Endothelial cell of umbilical vein (primary cell): ENCODE measurements at regions of chr6 and their contacts with region 1.

Region 1: DNA sequence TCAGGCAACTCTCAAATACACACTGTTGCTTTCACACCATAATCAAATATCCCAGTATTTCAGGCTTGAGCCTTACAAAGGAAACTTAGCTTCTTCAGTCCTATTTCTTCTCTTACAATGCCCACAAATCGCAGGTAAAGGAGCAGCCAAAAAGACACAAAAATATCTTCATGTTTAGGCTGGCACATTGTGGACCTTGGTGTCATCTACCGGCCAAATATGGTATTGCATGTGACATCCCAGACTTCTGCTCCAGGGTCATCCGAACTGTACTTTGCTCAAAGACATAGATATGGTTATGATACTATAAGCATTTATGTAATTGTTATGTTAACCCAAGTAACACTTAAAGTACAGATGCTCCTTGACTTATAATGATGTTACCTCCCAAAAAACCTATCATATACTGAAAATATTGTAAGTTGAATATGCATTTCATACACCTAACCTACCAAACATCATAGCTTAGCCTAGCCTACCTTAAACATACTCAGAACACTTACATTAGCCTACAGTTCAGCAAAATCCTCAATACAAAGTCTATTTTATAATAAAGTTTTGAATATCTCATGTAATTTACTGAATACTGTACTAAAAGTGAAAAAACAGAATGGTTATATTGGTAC is 4.6 kb downstream of the OR2H2 start:
- DNase-seq: peak; percentile 57
- H3K4me3 ChIP-seq: no peak overlapping the region
- H3K27ac ChIP-seq: no peak overlapping the region
- H3K4me1 ChIP-seq: no peaks in the 10 kb centered on the region
- H3K27me3 ChIP-seq: peaks cover 0 to 8% of the 10 kb centered on the region in 2 experiments
- CTCF ChIP-seq: peak; percentile 73 to 84
- POLR2A ChIP-seq: no peak

Region 2: DNA sequence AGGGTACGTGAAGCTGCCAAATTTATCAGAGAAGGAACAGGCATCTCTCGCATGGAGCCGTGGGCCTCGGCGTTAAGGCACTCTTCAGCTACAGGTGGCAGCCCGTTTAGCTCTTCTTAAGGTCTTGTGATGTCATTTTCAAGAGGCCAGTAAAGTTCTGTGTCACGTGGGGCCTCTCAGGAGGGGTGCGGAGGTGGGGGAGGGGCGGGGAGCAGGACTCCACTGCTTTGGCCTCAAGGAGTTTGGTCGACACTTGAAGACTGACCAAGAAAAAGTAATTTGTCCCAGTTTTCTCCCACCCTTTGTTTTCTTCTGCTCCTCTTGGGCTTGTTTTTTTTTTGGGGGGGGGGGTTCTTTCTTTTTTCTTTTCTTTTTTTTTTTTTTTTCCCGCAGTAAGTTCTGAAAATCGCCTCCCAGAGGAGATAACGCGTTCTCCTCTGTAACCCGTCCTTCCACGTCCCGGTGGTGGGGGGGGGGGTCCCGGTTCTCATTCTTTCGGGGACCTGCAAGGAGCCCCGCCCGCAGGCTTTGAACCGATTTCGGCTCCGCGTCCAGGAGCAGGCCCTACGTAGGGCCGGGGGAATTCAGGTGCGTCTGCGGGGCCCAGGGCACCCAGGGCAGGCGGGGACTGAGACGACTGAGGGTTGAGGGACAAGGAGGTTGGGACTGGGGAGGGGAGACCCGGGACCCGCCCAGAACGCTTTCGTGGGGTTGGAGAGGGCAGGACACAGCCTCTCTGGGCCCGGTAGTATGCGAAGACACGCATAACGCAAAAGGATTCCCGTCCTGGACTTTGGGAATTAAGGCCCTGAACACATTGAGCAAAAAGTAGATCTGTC is 1100.0 kb before region 1 on chr6:
- CTCF ChIA-PET with region 1: no interaction called
- POLR2A ChIA-PET with region 1: no interaction called
- dilution Hi-C with region 1: no loop called
- intact Hi-C with region 1: no loop called
- DNase-seq: peak; percentile 58
- H3K4me3 ChIP-seq: peak overlapping the region; percentile 48 to 97 (median 82)
- H3K27ac ChIP-seq: no peak overlapping the region
- H3K4me1 ChIP-seq: peaks cover 6% of the 10 kb centered on the region
- H3K27me3 ChIP-seq: peaks cover 5 to 10% of the 10 kb centered on the region in 2 experiments
- CTCF ChIP-seq: no peak
- POLR2A ChIP-seq: no peak

Region 3: DNA sequence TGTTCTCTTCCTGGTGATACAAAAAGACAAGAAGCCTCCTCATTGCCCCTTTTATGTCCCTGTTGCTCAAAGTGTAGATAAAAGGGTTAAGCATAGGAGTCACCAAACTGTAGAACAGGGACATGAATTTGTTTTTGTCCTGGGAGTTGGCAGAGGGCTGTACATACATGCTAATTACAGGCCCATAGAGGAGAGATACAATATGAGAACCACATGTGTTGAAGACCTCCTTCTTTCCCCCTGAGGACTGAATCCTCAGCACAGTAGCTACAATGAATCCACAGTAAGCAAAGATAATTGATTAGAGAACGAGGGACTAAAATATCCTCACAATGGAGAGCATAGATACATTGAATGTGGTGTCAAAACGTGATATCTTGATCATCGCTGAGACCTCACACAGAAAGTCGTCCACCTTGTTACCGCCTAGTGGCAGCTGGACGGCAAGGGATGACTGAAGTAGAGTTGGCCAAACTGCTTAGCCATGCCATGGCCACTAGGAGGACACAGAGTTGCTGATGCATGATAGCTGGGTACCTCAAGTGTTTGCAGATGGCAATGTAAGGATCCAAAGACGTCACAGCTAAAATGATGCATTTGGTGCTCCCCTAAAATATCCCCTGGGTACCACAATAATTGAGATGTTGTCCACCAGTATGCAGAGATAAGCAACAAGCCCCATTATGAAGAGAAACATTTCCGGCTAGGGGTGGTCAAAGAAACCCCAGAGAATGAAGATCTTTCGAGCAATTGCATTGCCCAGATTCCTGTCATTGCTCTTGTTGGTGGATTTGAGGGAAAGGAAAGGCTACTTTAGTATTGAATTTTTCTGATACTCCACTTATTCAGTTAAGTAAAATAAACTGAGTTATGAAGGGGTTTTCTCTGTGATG is 517.5 kb before region 1 on chr6:
- CTCF ChIA-PET with region 1: interaction called, 12 read pairs
- POLR2A ChIA-PET with region 1: no interaction called
- dilution Hi-C with region 1: no loop called
- intact Hi-C with region 1: loop called (anchors 1 kb)
- DNase-seq: peak; percentile 25
- H3K4me3 ChIP-seq: no peak overlapping the region
- H3K27ac ChIP-seq: no peak overlapping the region
- H3K4me1 ChIP-seq: no peaks in the 10 kb centered on the region
- H3K27me3 ChIP-seq: no peaks in the 10 kb centered on the region
- CTCF ChIP-seq: peak; percentile 53 to 73
- POLR2A ChIP-seq: no peak

Region 4: DNA sequence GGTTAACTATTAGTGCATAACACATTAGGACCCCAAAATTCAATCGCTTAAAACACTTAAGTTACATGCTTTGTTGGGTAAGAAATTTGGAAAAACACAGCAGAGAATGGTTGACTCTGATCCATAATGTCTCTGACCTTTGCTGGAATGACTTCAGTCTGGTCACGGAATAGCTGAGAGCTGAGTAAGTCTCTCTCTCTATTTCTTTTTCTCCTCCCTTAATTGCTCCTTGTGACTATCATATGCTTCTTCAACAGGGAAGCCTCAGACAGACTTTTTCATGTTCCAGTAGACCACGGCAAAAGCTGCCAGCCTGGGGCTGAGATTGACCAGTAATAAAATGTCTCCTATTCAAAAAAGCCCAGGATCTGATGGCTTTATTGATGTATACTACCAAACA is 170.0 kb before region 1 on chr6:
- CTCF ChIA-PET with region 1: no interaction called
- POLR2A ChIA-PET with region 1: no interaction called
- dilution Hi-C with region 1: no loop called
- intact Hi-C with region 1: no loop called
- DNase-seq: no peak
- H3K4me3 ChIP-seq: no peak overlapping the region
- H3K27ac ChIP-seq: no peak overlapping the region
- H3K4me1 ChIP-seq: no peaks in the 10 kb centered on the region
- H3K27me3 ChIP-seq: no peaks in the 10 kb centered on the region
- CTCF ChIP-seq: no peak
- POLR2A ChIP-seq: no peak

Region 5: DNA sequence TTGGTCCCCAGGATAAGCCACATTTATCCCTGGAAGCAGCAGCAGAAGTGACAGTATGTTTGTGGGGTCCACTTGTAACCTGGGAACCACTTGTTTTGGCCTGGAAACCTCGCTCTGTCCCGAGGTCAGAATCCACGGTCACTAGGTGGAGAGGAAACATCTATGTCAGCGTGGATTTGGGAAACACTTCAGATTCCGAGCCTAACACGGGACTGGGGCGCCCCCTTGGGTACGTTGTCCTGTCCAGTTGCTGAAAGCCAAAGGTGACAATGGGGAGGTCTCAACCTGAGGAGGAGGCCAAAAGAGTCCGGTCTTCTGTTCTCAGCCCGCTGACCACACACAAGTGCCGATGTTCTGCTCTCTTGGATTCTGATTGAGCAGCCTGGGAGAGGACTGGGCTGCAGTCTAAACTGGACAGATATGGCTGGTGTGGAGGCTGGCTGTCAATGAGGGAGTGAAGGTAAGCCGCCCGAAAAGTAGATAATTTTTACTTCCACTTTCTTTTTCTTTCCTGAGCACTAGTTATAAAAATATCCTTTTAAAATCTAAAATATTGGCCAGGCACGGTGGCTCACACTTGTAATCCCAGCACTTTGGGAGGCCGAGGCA is 96.3 kb after region 1 on chr6:
- CTCF ChIA-PET with region 1: no interaction called
- POLR2A ChIA-PET with region 1: no interaction called
- dilution Hi-C with region 1: no loop called
- intact Hi-C with region 1: no loop called
- DNase-seq: no peak
- H3K4me3 ChIP-seq: no peak overlapping the region
- H3K27ac ChIP-seq: no peak overlapping the region
- H3K4me1 ChIP-seq: no peaks in the 10 kb centered on the region
- H3K27me3 ChIP-seq: peaks cover 0 to 8% of the 10 kb centered on the region in 2 experiments
- CTCF ChIP-seq: no peak
- POLR2A ChIP-seq: no peak